ENCODE measurements at regions of chr14 and their contacts with region 1.

Region 1: GRCh38 chr14:30829853-30830252 is 44.5 kb upstream of the COCH start:
- DNase-seq: no peak
- H3K4me3 ChIP-seq: no peak overlapping the region
- CTCF ChIP-seq: no peak

Region 2: DNA sequence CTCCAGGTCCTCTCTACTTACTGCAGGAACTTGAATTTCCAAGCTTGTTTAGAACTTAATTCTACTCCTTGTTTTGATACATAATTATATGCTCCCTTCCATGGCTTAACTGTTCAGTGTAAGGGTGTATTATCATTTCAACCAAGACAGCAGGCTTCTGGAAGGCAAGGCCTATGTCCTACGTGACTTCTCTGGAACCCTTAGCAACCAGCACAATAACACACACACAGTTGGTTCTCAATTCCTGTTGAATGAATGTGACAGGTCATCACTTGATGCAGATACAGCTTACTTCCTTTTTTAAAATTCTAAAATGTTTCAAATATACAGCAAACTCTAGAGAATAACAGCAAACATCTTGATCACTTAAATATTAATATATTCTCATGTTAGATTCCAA is 33.1 kb before region 1 on chr14:
- in situ Hi-C with region 1: loop called (anchors 5 kb)
- DNase-seq: no peak
- H3K4me3 ChIP-seq: no peak overlapping the region
- CTCF ChIP-seq: no peak

Region 3: DNA sequence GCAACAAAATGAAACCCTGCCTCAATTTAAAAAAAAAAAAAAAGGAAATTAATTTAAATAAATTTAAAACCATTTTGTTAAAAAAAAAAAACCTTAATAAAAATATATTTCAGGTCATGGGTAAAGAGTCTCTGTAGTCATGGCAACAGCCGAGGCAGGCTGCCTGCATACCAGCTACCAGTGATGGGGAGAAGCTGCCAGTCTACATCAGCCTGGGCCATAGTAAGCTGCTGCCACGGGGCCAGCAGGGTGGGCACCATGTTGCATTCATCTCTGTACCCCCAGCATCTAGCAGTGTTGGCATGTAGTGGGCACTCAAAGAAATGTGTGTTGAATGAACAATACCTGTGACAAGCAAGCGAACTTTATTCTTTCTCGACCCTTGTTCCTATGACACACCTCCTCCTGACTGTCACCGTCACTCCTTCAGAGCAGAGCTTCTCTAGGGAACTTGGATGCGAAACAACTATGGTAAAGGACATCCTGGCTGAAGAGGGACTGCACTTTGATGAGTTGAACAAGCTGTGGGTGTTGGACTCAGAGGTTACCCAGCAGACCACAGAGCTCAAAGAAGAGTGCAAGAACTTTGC is 188.3 kb after region 1 on chr14:
- in situ Hi-C with region 1: no loop called
- DNase-seq: no peak
- H3K4me3 ChIP-seq: no peak overlapping the region
- CTCF ChIP-seq: no peak

Region 4: GRCh38 chr14:31090883-31091764 is 261.3 kb after region 1 on chr14:
- in situ Hi-C with region 1: no loop called
- DNase-seq: peak; percentile 42
- H3K4me3 ChIP-seq: no peak overlapping the region
- CTCF ChIP-seq: no peak